ENCODE measurements at regions of chr1 and their contacts with region 1.

Region 1: GRCh38 chr1:235513495-235514366 is 9.5 kb upstream of the B3GALNT2 start:
- DNase-seq: no peak
- ATAC-seq: peak in 3 of 4 donors; percentile 37 to 66 (median 61)
- H3K4me3 ChIP-seq: no peak overlapping the region
- H3K27ac ChIP-seq: no peak overlapping the region
- H3K4me1 ChIP-seq: no peaks in the 10 kb centered on the region
- H3K27me3 ChIP-seq: no peaks in the 10 kb centered on the region
- CTCF ChIP-seq: peak; percentile 88

Region 2: GRCh38 chr1:235783148-235783776 is 269.5 kb after region 1 on chr1:
- intact Hi-C with region 1: loop called (anchors 2 to 5 kb)
- DNase-seq: no peak
- ATAC-seq: no peak
- H3K4me3 ChIP-seq: no peak overlapping the region
- H3K27ac ChIP-seq: no peak overlapping the region
- H3K4me1 ChIP-seq: no peaks in the 10 kb centered on the region
- H3K27me3 ChIP-seq: no peaks in the 10 kb centered on the region
- CTCF ChIP-seq: peak; percentile 46

Region 3: DNA sequence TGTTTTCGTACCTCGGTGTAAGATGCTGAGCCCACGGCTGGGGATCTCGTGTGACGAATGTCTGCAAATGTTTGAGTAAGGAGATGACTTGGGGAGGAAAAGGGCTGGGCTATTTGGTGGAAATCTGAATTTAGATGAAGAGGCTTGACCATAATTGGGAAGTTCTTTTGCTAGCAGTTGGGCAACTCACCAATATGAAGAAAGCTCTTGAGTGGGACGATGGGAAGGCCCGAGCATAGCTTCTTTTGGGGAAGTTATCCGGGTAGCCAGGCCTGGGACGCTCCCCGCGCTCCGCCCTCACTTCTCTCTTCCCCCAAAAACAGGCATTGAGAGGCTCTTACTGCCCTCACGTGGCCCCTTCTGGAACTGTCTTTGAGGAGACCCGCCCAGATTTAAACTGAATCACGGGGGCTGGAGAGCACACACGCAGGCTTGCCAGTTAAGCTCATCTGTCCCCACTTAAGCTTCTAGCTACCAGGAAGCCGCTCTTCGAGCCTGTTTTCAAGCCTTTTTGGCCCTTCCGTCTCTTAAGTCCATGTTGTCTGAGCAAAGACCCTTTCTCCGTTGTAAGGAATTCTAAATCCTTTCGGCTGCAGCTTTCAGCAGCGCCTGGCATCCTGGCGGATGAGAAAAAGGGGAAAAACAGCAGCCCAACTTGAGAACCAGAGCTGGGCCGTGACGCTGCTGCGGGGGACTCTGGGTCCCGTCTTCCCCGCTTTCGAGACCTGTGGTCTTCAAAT is 458.0 kb after region 1 on chr1:
- intact Hi-C with region 1: loop called (anchors 5 to 10 kb)
- DNase-seq: peak; percentile 91 to 94
- ATAC-seq: peak; percentile 89 to 95 (median 94)
- H3K4me3 ChIP-seq: peak overlapping the region; percentile 62
- H3K27ac ChIP-seq: peak overlapping the region; percentile 77
- H3K4me1 ChIP-seq: peaks cover 5% of the 10 kb centered on the region
- H3K27me3 ChIP-seq: no peaks in the 10 kb centered on the region
- CTCF ChIP-seq: peak; percentile 74

Measured in psoas muscle (tissue), 8 donors.